ENCODE measurements at regions of chr12 and their contacts with region 1.

Region 1: GRCh38 chr12:7645394-7646177 is 20.1 kb downstream of the APOBEC1 start:
- DNase-seq: no peak
- H3K4me3 ChIP-seq: no peak overlapping the region
- H3K27ac ChIP-seq: no peak overlapping the region
- H3K4me1 ChIP-seq: peaks cover 7% of the 10 kb centered on the region
- H3K27me3 ChIP-seq: no peaks in the 10 kb centered on the region
- CTCF ChIP-seq: peak; percentile 75 to 84

Region 2: DNA sequence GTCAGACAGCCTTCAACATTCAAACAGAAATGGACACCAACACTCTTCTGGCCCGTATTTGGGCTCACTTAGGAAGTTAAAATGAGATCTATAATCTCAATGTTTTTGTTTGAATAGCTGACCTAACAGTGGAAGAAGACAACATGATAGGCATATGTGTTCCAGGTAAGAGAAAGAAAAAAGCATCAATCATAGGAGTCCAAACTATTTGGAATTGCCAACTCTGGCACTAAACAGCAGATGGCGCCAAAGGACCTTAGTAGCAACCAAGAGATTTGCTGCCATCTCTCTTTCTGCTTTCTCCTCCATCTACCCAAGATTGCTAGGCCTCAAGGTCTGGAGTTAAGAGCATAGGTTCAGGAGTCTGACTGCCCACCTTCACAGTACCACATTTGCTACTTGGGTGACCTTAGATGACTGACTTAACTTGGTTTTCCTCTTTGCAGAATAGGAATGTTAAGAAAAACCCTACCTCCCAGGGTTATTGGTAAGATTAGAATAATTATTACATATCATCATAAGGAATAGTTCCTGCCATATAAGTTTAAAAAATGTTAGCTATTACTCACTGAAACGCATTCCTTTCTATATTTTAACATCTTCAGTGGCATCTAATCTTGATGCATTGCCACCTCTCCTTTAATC is 425.9 kb before region 1 on chr12:
- CTCF ChIA-PET with region 1: no interaction called
- dilution Hi-C with region 1: loop called (anchors 25 kb)
- in situ Hi-C with region 1: loop called in 1 of 2 experiments (anchors 5 kb)
- intact Hi-C with region 1: no loop called
- DNase-seq: peak; percentile 56
- H3K4me3 ChIP-seq: no peak overlapping the region
- H3K27ac ChIP-seq: no peak overlapping the region
- H3K4me1 ChIP-seq: peaks cover 3% of the 10 kb centered on the region
- H3K27me3 ChIP-seq: peaks cover 9% of the 10 kb centered on the region
- CTCF ChIP-seq: peak; percentile 87 to 94

Region 3: GRCh38 chr12:7667125-7667524 is 21.5 kb after region 1 on chr12:
- CTCF ChIA-PET with region 1: interaction called, 4 read pairs
- dilution Hi-C with region 1: no loop called
- in situ Hi-C with region 1: no loop called
- intact Hi-C with region 1: loop called (anchors 1 kb)
- DNase-seq: peak; percentile 12
- H3K4me3 ChIP-seq: no peak overlapping the region
- H3K27ac ChIP-seq: no peak overlapping the region
- H3K4me1 ChIP-seq: no peaks in the 10 kb centered on the region
- H3K27me3 ChIP-seq: no peaks in the 10 kb centered on the region
- CTCF ChIP-seq: peak; percentile 20 to 54

Region 4: GRCh38 chr12:7716381-7716780 is 70.8 kb after region 1 on chr12:
- CTCF ChIA-PET with region 1: no interaction called
- dilution Hi-C with region 1: loop called (anchors 5 kb)
- in situ Hi-C with region 1: no loop called
- intact Hi-C with region 1: no loop called
- DNase-seq: peak; percentile 4
- H3K4me3 ChIP-seq: no peak overlapping the region
- H3K27ac ChIP-seq: no peak overlapping the region
- H3K4me1 ChIP-seq: no peaks in the 10 kb centered on the region
- H3K27me3 ChIP-seq: no peaks in the 10 kb centered on the region
- CTCF ChIP-seq: peak; percentile 15 to 50

Region 5: DNA sequence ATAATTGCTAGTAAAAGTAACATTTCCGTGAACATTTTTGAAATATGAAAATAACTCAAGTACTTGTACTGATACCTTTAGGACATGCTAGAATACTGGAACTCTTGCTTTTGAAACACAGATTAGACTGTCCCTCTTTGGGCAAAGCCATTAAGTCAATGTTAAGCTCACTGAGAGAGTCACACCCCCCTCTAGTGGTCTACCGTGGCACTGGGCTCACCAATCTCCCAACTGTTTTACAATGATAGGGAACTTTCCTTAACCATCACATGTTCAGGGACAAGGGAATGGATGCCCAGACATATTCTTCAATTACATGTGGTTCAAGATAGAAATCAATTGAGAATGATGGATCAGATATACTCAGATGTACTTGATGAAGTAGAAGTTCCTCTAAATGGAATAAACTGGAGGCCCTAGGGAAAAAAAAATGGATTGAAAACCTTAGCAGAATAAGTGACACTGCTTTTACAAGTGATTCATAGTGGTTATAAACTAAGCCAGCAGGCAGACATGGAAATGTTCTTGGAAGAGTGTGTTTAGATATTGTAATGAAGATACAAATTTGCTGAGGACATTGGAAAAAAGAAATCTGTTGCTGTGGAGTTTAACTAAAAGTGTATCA is 161.4 kb after region 1 on chr12:
- CTCF ChIA-PET with region 1: interaction called, 8 read pairs
- dilution Hi-C with region 1: no loop called
- in situ Hi-C with region 1: loop called in 1 of 2 experiments (anchors 10 kb)
- intact Hi-C with region 1: loop called (anchors 1 kb)
- DNase-seq: peak; percentile 56
- H3K4me3 ChIP-seq: no peak overlapping the region
- H3K27ac ChIP-seq: no peak overlapping the region
- H3K4me1 ChIP-seq: peaks cover 14% of the 10 kb centered on the region
- H3K27me3 ChIP-seq: no peaks in the 10 kb centered on the region
- CTCF ChIP-seq: peak; percentile 95 to 98

Region 6: GRCh38 chr12:7995266-7995963 is 349.8 kb after region 1 on chr12:
- CTCF ChIA-PET with region 1: no interaction called
- dilution Hi-C with region 1: no loop called
- in situ Hi-C with region 1: no loop called
- intact Hi-C with region 1: loop called (anchors 1 kb)
- DNase-seq: peak; percentile 77
- H3K4me3 ChIP-seq: no peak overlapping the region
- H3K27ac ChIP-seq: peak overlapping the region; percentile 40
- H3K4me1 ChIP-seq: peaks cover 10% of the 10 kb centered on the region
- H3K27me3 ChIP-seq: no peaks in the 10 kb centered on the region
- CTCF ChIP-seq: peak; percentile 69 to 73